Activated CD4-positive, alpha-beta memory T cell treated with anti-CD3 and anti-CD28 coated beads, Interleukin-2, amount 10 ng/mL, durations not matched to agents 7 days and 5 days (primary cell): ENCODE measurements at regions of chr15 and their contacts with region 1.

Region 1: DNA sequence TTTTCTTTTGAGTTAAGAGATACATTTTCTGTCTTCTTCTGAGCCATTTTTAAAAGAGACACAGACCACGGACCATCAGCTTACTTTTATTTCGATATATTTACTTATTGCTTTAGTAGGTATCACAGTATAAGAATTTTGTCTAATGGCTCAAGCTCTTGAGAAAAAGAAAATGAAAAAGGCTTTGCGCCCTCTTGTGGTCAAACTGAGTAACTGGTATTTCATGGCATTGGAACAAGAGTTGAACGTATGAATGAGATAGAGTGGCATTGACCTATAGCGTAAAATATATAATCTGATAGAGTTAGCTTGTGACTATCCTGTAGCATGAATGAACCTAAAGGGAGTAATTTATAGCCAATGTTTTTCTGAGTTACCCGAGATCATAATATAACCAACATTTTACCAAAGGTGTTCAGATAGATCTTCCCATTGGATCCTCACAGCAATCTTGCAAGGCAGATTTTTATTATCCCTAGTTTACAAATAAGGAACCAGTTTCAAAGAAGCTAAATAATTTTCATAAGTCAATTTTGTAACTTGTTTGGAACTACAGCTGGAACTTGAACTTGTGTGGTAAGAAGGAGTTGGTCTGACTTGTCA is 154.6 kb downstream of the POLR2M start:
- DNase-seq: no peak
- H3K4me3 Mint-ChIP-seq: no peak overlapping the region
- H3K27ac Mint-ChIP-seq: no peak overlapping the region
- H3K4me1 Mint-ChIP-seq: no peaks in the 10 kb centered on the region
- H3K27me3 Mint-ChIP-seq: peaks cover 35% of the 10 kb centered on the region

Region 2: GRCh38 chr15:57561041-57561711 is 300.0 kb before region 1 on chr15:
- CTCF ChIA-PET with region 1: interaction called, 14 read pairs
- POLR2A ChIA-PET with region 1: no interaction called
- DNase-seq: peak; percentile 67
- H3K4me3 Mint-ChIP-seq: no peak overlapping the region
- H3K27ac Mint-ChIP-seq: no peak overlapping the region
- H3K4me1 Mint-ChIP-seq: peaks cover 38% of the 10 kb centered on the region
- H3K27me3 Mint-ChIP-seq: peaks cover 5% of the 10 kb centered on the region

Region 3: DNA sequence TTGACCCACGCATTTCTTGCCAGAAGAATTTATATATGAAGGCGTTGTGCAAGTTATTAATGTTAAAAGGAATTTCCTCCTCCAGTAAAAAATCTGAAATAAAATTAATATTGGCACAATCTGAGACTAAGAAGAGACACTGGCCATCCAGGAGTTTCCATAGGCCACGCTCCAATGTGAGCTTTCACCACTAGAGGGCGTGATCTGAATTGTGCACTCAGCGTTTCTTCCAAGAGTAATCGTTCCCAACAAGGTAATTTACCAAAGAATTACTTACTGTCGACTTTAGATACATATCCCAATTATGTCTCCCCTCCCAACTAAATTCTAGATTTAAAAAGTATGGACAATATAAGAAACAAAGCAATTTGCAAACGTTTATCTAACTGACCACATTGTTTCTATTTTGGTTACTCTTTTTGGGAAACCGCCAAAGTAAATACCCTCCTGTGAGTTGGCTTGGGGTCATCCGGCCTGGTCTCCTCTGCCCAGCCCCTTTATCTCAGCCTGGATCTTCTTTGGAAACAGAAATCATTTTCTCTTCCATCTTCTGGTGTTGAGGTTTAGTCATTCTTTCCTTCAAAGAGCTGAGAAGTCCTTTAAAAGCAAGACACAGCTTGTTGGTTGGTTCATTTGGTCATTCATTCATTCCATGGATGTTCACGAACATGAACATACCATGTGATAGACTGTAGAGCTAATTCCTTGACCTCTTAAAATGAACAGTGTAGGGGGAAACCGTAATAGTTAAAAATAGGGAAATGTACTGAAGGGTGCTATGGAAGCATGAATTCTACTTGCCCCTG is 128.4 kb before region 1 on chr15:
- CTCF ChIA-PET with region 1: interaction called, 35 read pairs
- POLR2A ChIA-PET with region 1: no interaction called
- DNase-seq: peak; percentile 42
- H3K4me3 Mint-ChIP-seq: no peak overlapping the region
- H3K27ac Mint-ChIP-seq: no peak overlapping the region
- H3K4me1 Mint-ChIP-seq: no peaks in the 10 kb centered on the region
- H3K27me3 Mint-ChIP-seq: no peaks in the 10 kb centered on the region

Region 4: GRCh38 chr15:57751177-57751800 is 109.8 kb before region 1 on chr15:
- CTCF ChIA-PET with region 1: interaction called, 156 read pairs
- POLR2A ChIA-PET with region 1: interaction called, 4 read pairs
- DNase-seq: no peak
- H3K4me3 Mint-ChIP-seq: no peak overlapping the region
- H3K27ac Mint-ChIP-seq: no peak overlapping the region
- H3K4me1 Mint-ChIP-seq: no peaks in the 10 kb centered on the region
- H3K27me3 Mint-ChIP-seq: peaks cover 3% of the 10 kb centered on the region

Region 5: DNA sequence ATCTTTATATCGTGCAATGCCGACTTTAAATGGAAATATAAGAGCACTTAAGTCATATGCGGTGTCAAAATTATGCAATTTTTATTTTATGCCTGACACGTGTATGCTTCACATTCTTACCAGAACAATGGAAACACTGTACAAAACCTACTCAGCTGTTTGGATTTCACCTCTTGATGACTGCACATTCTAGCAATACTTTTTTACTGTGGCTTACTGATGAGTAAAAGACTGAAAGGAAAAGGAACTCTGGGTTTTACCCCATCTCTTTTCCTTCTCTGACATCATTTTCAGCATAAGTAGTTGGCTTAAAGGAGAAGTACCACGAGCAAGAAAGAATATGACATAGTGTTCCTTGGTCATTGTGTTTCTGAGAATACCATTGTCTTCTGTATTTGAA is 11.8 kb before region 1 on chr15:
- CTCF ChIA-PET with region 1: interaction called, 10 read pairs
- POLR2A ChIA-PET with region 1: no interaction called
- DNase-seq: no peak
- H3K4me3 Mint-ChIP-seq: no peak overlapping the region
- H3K27ac Mint-ChIP-seq: no peak overlapping the region
- H3K4me1 Mint-ChIP-seq: no peaks in the 10 kb centered on the region
- H3K27me3 Mint-ChIP-seq: peaks cover 22% of the 10 kb centered on the region

Region 6: DNA sequence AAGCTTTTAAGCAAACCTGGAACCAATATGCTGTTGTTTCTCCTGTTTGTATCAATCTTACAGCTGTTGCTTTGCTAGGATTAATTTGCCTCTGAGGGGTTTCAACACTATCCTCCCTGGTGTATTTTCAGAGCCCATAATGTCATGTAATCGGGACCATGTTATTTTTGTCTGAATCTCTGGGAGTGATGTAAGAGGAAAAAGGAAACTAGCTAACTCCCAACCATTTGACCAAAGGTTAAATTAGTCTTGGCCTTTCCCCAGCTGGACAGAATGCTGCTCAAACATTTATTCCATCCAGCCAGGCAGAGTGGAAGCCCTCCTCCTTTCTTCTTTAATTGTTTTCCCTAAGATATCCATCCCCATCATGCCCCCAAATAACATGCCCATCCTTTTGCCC is 62.2 kb after region 1 on chr15:
- CTCF ChIA-PET with region 1: no interaction called
- POLR2A ChIA-PET with region 1: no interaction called
- DNase-seq: no peak
- H3K4me3 Mint-ChIP-seq: no peak overlapping the region
- H3K27ac Mint-ChIP-seq: no peak overlapping the region
- H3K4me1 Mint-ChIP-seq: no peaks in the 10 kb centered on the region
- H3K27me3 Mint-ChIP-seq: peaks cover 7% of the 10 kb centered on the region

Region 7: DNA sequence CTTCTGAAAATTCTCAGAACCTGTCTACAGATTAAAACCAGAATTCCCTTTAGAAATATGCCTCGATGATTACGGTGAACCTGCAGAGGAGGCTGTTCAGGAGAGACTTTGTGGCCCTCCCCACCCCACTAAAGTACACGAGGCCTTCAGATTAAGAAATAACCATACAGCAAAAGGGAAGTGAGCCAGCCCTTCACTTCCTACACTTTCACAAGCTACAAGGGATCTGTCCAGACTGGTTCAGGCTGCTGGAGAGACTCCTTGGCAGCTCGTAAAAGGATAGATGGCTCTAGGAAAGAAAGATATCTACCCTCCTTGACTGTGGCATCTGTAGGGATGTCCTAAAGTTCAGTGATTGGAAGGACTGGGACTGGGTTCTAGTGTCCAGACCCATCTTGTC is 101.8 kb after region 1 on chr15:
- CTCF ChIA-PET with region 1: no interaction called
- POLR2A ChIA-PET with region 1: no interaction called
- DNase-seq: no peak
- H3K4me3 Mint-ChIP-seq: no peak overlapping the region
- H3K27ac Mint-ChIP-seq: no peak overlapping the region
- H3K4me1 Mint-ChIP-seq: no peaks in the 10 kb centered on the region
- H3K27me3 Mint-ChIP-seq: peaks cover 6% of the 10 kb centered on the region

Region 8: GRCh38 chr15:58070801-58071418 is 209.8 kb after region 1 on chr15:
- CTCF ChIA-PET with region 1: interaction called, 32 read pairs
- POLR2A ChIA-PET with region 1: no interaction called
- DNase-seq: peak; percentile 48
- H3K4me3 Mint-ChIP-seq: no peak overlapping the region
- H3K27ac Mint-ChIP-seq: no peak overlapping the region
- H3K4me1 Mint-ChIP-seq: peaks cover 3% of the 10 kb centered on the region
- H3K27me3 Mint-ChIP-seq: peaks cover 27% of the 10 kb centered on the region